ENCODE measurements at regions of chr3 and their contacts with region 1.

Region 1: GRCh38 chr3:150409512-150410310 is 1.6 kb downstream of the TSC22D2 start:
- DNase-seq: peak; percentile 93

Region 2: DNA sequence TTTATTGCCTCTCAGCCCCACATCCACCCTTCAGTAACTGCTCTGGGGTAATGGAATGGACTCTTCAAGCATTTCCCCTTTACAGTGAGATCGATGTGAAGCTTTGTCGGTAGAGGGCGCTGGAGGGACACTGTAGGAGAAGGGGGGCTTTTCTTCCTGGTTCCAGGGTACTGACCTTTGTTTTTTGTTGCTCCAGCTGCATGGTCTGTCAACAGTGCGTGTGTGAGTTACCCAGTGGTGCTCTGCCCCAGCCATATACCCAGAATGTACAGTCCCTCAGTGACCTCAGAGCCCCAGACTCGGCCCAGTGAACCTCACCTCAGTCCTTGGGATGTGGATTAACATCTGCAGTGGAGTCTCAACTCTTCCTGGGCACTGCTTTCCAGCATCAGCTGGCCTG is 181.9 kb before region 1 on chr3:
- intact Hi-C with region 1: loop called in 1 of 2 experiments (anchors 10 kb)
- DNase-seq: no peak

Region 3: GRCh38 chr3:150371741-150372254 is 37.9 kb before region 1 on chr3:
- intact Hi-C with region 1: loop called in 1 of 2 experiments (anchors 2 kb)
- DNase-seq: no peak

Region 4: GRCh38 chr3:150469943-150470738 is 60.4 kb after region 1 on chr3:
- intact Hi-C with region 1: loop called in 1 of 2 experiments (anchors 10 kb)
- DNase-seq: no peak